HepG2 (cell line): ENCODE measurements at regions of chr3 and their contacts with region 1.

Region 1: GRCh38 chr3:44338010-44338827 is at the start of gene TCAIM:
- DNase-seq: peak; percentile 94
- ATAC-seq: peak; percentile 96
- H3K4me3 ChIP-seq: peak within 1 kb of the TSS; percentile 80 to 90 (median 81)
- H3K27ac ChIP-seq: peak within 1 kb of the TSS; percentile 96
- H3K4me1 ChIP-seq: peaks cover 59% of the 10 kb centered on the region
- H3K27me3 ChIP-seq: no peaks in the 10 kb centered on the region; a peak in 1 of 5 replicates
- CTCF ChIP-seq: peak; percentile 39; the same call in 1 of the 2 replicates
- EP300 ChIP-seq: no peak
- POLR2A ChIP-seq: peak in 1 of 2 experiments; percentile 74
- RAD21 ChIP-seq: peak; percentile 58
- total RNA-seq, gene TCAIM: 16.9 and 21.1 TPM in 2 replicates

Region 2: DNA sequence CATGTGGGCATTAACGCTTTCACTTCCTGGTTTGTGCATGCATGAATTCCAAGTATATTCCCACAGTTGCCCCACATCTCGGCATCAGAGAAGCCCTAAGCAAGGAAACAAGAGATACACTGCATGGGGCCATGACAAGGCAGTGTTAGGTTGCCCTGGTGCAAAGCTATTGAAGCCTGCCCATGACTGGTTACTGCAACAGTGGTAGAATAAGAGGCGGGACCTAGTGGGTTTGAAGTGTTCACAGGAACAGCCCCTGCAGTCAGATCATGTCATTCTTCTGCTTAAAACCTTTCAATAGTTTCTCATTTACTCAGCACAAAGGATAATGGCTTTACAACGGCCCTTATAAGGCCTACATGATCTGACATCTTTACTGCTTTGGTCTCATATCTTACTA is 177.4 kb before region 1 on chr3:
- CTCF ChIA-PET with region 1: no interaction called
- POLR2A ChIA-PET with region 1: no interaction called
- in situ Hi-C with region 1: no loop called
- intact Hi-C with region 1: no loop called
- DNase-seq: no peak
- ATAC-seq: no peak
- H3K4me3 ChIP-seq: no peak overlapping the region
- H3K27ac ChIP-seq: no peak overlapping the region
- H3K4me1 ChIP-seq: no peaks in the 10 kb centered on the region
- H3K27me3 ChIP-seq: peaks cover 0 to 12% of the 10 kb centered on the region in 2 experiments; a peak in 2 of 5 replicates
- CTCF ChIP-seq: no peak
- EP300 ChIP-seq: no peak
- POLR2A ChIP-seq: no peak
- RAD21 ChIP-seq: no peak

Region 3: DNA sequence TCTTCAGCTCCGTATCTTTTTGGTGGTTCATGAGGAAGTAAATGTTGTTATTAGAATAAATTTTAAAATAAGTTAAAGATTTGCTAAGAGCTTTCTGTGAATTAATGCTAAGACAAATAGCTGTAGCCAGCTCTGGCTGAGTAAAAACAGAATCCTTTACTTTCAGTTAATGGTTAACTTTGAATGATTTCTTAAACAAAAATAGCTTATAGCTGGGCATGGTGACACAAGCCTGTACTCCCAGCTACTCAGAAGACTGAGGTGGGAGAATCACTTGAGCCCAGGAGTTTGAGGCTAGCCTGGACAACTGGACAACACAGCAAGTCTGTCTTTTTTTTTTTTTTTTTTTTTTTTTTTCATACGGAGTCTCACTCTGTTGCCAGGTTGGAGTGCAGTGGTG is 25.4 kb after region 1 on chr3:
- CTCF ChIA-PET with region 1: no interaction called
- POLR2A ChIA-PET with region 1: interaction called, 67 read pairs
- in situ Hi-C with region 1: no loop called
- intact Hi-C with region 1: no loop called
- DNase-seq: peak; percentile 82
- ATAC-seq: peak; percentile 83
- H3K4me3 ChIP-seq: peak overlapping the region in 2 of 3 experiments; percentile 40 to 42; a peak in 2 of 6 replicates
- H3K27ac ChIP-seq: peak overlapping the region; percentile 52
- H3K4me1 ChIP-seq: peaks cover 64% of the 10 kb centered on the region
- H3K27me3 ChIP-seq: no peaks in the 10 kb centered on the region
- CTCF ChIP-seq: no peak
- EP300 ChIP-seq: peak in 1 of 2 experiments; percentile 45; a peak in 1 of 4 replicates
- POLR2A ChIP-seq: no peak
- RAD21 ChIP-seq: no peak

Region 4: GRCh38 chr3:44400771-44401170 is 62.6 kb after region 1 on chr3:
- CTCF ChIA-PET with region 1: no interaction called
- POLR2A ChIA-PET with region 1: interaction called, 10 read pairs
- in situ Hi-C with region 1: no loop called
- intact Hi-C with region 1: no loop called
- DNase-seq: peak; percentile 12
- ATAC-seq: peak; percentile 64
- H3K4me3 ChIP-seq: no peak overlapping the region
- H3K27ac ChIP-seq: no peak overlapping the region
- H3K4me1 ChIP-seq: peaks cover 23% of the 10 kb centered on the region
- H3K27me3 ChIP-seq: no peaks in the 10 kb centered on the region
- CTCF ChIP-seq: no peak
- EP300 ChIP-seq: peak in 1 of 2 experiments; percentile 8; a peak in 1 of 4 replicates
- POLR2A ChIP-seq: no peak
- RAD21 ChIP-seq: no peak

Region 5: GRCh38 chr3:44439499-44440295 is 101.5 kb after region 1 on chr3:
- CTCF ChIA-PET with region 1: no interaction called
- POLR2A ChIA-PET with region 1: interaction called, 43 read pairs
- in situ Hi-C with region 1: no loop called
- intact Hi-C with region 1: loop called (anchors 1 kb)
- DNase-seq: peak; percentile 97
- ATAC-seq: peak; percentile 99
- H3K4me3 ChIP-seq: peak overlapping the region; percentile 21 to 54 (median 54)
- H3K27ac ChIP-seq: peak overlapping the region; percentile 93
- H3K4me1 ChIP-seq: peaks cover 45% of the 10 kb centered on the region
- H3K27me3 ChIP-seq: no peaks in the 10 kb centered on the region
- CTCF ChIP-seq: peak; percentile 17
- EP300 ChIP-seq: peak; percentile 68 to 82; a peak in 3 of 4 replicates
- POLR2A ChIP-seq: peak; percentile 36 to 42; a peak in 2 of 4 replicates
- RAD21 ChIP-seq: no peak; the same call in 1 of the 2 replicates

Region 6: GRCh38 chr3:44477312-44478030 is 139.3 kb after region 1 on chr3 and contains the start of gene ZNF445:
- CTCF ChIA-PET with region 1: no interaction called
- POLR2A ChIA-PET with region 1: interaction called, 32 read pairs
- in situ Hi-C with region 1: no loop called
- intact Hi-C with region 1: no loop called
- DNase-seq: peak; percentile 67
- ATAC-seq: peak; percentile 85
- H3K4me3 ChIP-seq: peak within 1 kb of the TSS; percentile 81 to 92 (median 87)
- H3K27ac ChIP-seq: peak within 1 kb of the TSS; percentile 88
- H3K4me1 ChIP-seq: peaks cover 56% of the 10 kb centered on the region
- H3K27me3 ChIP-seq: no peaks in the 10 kb centered on the region; a peak in 1 of 5 replicates
- CTCF ChIP-seq: no peak; the same call in 1 of the 2 replicates
- EP300 ChIP-seq: no peak
- POLR2A ChIP-seq: peak; percentile 26 to 60; a peak in 2 of 4 replicates
- RAD21 ChIP-seq: no peak
- total RNA-seq, gene ZNF445: 10.3 and 11.8 TPM in 2 replicates

Region 7: DNA sequence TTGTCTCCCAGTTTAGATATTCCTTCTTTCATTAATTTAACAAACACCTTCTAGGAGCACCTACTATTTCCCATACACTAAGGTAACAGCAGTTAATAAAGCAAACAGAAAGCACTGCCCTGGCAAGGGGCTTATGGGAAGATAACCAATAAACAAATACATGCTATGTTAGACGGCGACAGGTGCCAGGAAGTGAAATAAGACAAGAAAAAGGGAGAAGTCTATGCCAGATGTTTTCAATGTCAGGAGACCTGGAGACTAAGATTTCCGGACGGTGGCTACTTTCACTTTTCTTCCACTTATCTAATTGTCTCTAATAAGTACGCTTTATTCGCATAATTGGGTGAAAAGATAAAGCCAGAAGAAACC is 171.8 kb after region 1 on chr3:
- CTCF ChIA-PET with region 1: no interaction called
- POLR2A ChIA-PET with region 1: interaction called, 23 read pairs
- in situ Hi-C with region 1: no loop called
- intact Hi-C with region 1: loop called (anchors 5 kb)
- DNase-seq: no peak
- ATAC-seq: no peak; the same call in 2 of the 3 replicates
- H3K4me3 ChIP-seq: peak overlapping the region; percentile 73 to 99 (median 86)
- H3K27ac ChIP-seq: peak overlapping the region; percentile 73
- H3K4me1 ChIP-seq: peaks cover 59% of the 10 kb centered on the region
- H3K27me3 ChIP-seq: no peaks in the 10 kb centered on the region; a peak in 1 of 5 replicates
- CTCF ChIP-seq: no peak
- EP300 ChIP-seq: no peak
- POLR2A ChIP-seq: peak in 1 of 2 experiments; percentile 28; a peak in 1 of 4 replicates
- RAD21 ChIP-seq: no peak

Region 8: GRCh38 chr3:46236294-46237054 is 1898.3 kb after region 1 on chr3:
- CTCF ChIA-PET with region 1: no interaction called
- POLR2A ChIA-PET with region 1: no interaction called
- in situ Hi-C with region 1: no loop called
- intact Hi-C with region 1: loop called (anchors 10 kb)
- DNase-seq: no peak
- ATAC-seq: no peak
- H3K4me3 ChIP-seq: no peak overlapping the region
- H3K27ac ChIP-seq: no peak overlapping the region
- H3K4me1 ChIP-seq: no peaks in the 10 kb centered on the region
- H3K27me3 ChIP-seq: peaks cover 0 to 10% of the 10 kb centered on the region in 2 experiments; a peak in 2 of 5 replicates
- CTCF ChIP-seq: no peak
- EP300 ChIP-seq: no peak
- POLR2A ChIP-seq: no peak
- RAD21 ChIP-seq: no peak